ENCODE measurements at regions of chr22 and their contacts with region 1.

Region 1: DNA sequence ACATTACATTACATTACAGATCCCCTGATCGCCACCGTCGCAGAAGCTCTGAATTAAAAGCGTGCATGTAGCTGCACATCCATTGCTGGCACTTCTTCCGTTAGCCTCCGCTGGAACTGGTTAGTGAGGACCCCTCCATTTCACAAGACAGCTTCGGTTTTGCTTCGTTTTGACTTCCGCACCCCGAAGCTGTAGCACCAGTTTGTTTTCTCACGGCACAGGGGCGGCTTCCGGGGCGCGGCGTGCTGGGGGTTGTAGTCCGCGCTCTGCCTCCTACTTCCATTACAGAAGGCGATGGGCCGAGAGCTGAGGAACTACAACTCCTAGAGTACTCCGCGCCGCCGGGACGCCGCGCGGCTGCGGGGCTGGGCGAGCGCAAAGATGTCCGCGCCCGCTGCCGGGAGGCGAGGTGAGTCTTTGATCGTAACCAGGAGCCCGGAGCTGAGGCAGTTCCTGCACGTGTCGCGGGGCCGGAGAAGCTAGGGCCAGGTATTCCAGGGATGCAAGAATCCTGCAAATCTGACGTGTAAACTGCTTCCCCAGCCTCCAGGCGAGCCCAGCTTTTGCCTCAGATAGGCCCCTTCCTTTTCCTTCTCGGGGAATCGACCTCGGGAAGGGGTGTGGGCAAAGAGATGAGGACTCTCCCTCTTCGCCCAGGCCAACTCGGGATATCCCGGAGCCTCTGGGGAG is at the start of gene PEX26:
- DNase-seq: peak; percentile 93 to 96 (median 95)
- ATAC-seq: peak; percentile 89 to 97 (median 94)
- H3K4me3 ChIP-seq: peak within 1 kb of the TSS; percentile 94 to 99 (median 98)
- H3K27ac ChIP-seq: peak within 1 kb of the TSS; percentile 71 to 78 (median 77)
- H3K4me1 ChIP-seq: peaks cover 0 to 20% (median 10%) of the 10 kb centered on the region in 4 donors
- H3K27me3 ChIP-seq: no peaks in the 10 kb centered on the region
- CTCF ChIP-seq: no peak
- POLR2A ChIP-seq: peak; percentile 67
- total RNA-seq, gene PEX26: 22.7 to 42.5 (median 25.0) TPM

Region 2: DNA sequence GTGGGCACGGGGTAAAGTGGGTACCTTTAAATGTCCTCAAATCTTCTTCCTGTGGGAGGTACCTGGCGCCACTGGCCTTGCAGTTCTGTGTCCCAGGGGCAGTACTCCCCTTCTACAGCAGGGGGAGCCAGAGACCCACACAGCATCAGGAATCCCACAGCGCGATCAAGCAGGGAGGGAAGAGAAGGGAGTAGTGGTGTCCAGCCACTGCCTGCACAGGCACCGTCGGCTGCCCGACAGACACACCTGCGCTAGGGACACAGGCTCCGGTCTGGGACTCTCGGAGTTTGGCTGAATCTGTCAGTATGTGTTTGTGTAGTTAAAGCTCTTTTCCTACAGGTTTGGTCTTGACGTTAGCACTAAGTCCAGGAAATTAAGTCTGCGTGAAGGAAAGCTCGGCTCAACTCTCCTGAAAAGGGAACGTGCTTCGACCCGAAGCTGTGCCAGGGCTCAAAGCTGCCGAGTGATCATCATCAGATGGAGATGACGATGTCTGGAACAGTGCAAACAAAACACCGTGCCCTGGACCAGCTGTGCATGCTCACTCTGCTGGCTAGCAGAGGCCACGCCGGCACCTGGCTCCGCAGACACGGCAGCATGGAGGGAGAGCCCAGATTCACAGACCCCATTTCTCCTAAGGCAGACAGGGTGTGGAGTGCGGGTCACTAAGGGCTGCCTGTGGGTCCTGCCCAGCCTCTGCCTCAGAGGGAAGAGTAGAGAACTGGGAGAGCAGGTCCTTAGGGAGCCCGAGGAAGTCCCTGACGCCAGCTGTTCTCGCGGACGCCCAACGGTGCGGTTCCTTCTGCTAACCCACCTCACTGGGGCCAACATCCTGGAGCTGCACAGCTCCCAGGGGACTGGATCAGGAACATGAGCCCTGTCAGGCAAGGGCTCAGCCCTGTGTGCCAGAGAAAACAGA is 247.5 kb before region 1 on chr22:
- intact Hi-C with region 1: loop called (anchors 10 kb)
- DNase-seq: peak; percentile 77 to 89 (median 85)
- ATAC-seq: peak; percentile 85 to 93 (median 90)
- H3K4me3 ChIP-seq: no peak overlapping the region
- H3K27ac ChIP-seq: peak overlapping the region in 2 of 3 donors; percentile 40 to 66
- H3K4me1 ChIP-seq: peaks cover 0 to 50% (median 19%) of the 10 kb centered on the region in 4 donors
- H3K27me3 ChIP-seq: no peaks in the 10 kb centered on the region
- CTCF ChIP-seq: peak; percentile 98 to 99 (median 99)
- POLR2A ChIP-seq: no peak

Region 3: GRCh38 chr22:18001040-18001893 is 76.5 kb before region 1 on chr22:
- intact Hi-C with region 1: loop called in 1 of 2 experiments (anchors 10 kb)
- DNase-seq: peak; percentile 93
- ATAC-seq: peak; percentile 93 to 97 (median 95)
- H3K4me3 ChIP-seq: peak overlapping the region; percentile 79 to 98 (median 85)
- H3K27ac ChIP-seq: peak overlapping the region; percentile 86 to 98 (median 97)
- H3K4me1 ChIP-seq: peaks cover 0 to 13% (median 0%) of the 10 kb centered on the region in 4 donors
- H3K27me3 ChIP-seq: no peaks in the 10 kb centered on the region
- CTCF ChIP-seq: peak; percentile 37 to 68 (median 48)
- POLR2A ChIP-seq: peak; percentile 92

Region 4: DNA sequence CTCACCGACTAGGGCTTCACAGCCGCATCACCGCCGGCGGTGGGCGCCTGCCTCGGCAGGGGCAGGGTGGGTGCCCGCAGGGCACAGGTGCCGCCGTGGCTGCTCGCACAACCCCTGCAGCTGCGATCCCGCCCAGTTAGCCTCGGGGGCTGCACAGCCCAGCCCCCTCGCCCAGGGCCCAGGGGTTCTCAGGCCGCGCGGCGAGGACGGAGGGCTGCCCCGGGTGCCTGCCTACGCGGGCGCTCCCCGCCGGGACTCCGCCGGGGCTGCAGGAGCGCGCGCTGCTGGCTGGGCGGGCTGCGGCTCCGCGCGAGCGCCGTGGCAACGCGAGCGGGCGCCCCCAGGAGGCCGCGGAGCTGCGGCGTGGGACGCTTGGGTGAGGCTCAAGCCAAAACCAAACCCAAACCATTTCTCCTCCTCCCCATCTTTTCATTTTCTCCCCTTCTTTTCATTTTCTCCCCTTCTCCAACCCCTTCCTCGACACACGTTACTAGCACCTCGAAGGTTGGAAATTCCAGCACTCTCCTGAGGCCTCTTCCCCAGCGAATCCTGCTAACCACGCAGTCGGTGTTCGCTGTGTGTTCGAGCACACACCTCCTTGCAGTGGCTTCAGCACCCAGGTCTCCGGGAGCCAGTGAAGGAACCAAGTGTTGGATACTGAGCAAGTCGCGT is 53.4 kb before region 1 on chr22 and contains the start of gene MICAL3:
- intact Hi-C with region 1: loop called in 1 of 2 experiments (anchors 10 kb)
- DNase-seq: peak; percentile 68 to 78 (median 75)
- ATAC-seq: peak; percentile 86 to 94 (median 90)
- H3K4me3 ChIP-seq: peak within 1 kb of the TSS; percentile 64 to 82 (median 71)
- H3K27ac ChIP-seq: peak within 1 kb of the TSS; percentile 26 to 73 (median 51)
- H3K4me1 ChIP-seq: peaks cover 0 to 6% (median 0%) of the 10 kb centered on the region in 4 donors
- H3K27me3 ChIP-seq: no peaks in the 10 kb centered on the region
- CTCF ChIP-seq: peak; percentile 58 to 89 (median 64)
- POLR2A ChIP-seq: no peak
- total RNA-seq, gene MICAL3: 31.5 to 61.8 (median 48.2) TPM

Measured in right lobe of liver (tissue), 6 donors.